HEK293 (cell line): ENCODE measurements at regions of chr14 and their contacts with region 1.

Region 1: GRCh38 chr14:76911473-76911872 is 85.3 kb downstream of the LRRC74A start:
- H3K4me3 ChIP-seq: no peak overlapping the region
- H3K27ac ChIP-seq: no peak overlapping the region
- H3K4me1 ChIP-seq: no peaks in the 10 kb centered on the region
- CTCF ChIP-seq: no peak

Region 2: DNA sequence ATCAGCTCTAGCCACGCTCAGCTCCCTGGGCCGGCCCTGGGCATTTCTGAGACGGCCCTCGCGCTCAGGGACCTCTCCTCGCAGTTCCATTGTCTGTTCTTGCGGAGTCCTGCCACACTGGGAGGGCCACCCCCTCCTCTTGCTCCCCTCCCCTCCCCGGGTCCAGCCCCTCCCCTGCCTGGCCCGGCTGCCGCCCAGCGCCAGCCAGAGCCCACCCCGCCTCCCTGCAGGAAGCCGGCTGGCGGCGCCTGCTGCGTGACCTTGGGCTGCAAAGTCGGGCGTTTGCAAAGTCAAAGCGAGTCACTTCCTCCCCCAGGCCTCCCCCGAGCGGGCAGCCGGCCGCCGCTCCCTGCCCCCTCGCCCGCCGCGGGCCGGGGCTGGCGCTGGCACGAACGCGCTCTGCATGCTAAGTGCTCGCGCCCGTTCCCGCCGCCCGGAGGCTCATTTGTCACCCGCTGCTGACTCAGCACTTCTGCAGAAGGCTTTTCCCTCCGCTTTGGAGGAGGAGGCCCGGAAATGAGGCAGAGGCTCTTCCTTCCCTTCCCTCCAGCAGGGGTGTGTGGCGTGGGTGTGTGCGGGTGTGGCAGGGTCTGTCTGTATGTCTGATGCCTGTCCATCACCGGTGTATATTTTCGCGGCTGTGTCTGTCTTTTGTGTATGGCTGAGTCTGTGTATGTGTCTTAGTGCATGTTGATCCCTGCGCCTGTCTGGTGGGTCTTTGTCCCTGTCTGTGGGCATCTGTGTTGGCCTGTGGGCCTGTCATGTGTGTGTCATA is 45.0 kb after region 1 on chr14:
- CTCF ChIA-PET with region 1: interaction called, 28 read pairs
- POLR2A ChIA-PET with region 1: interaction called, 4 read pairs
- H3K4me3 ChIP-seq: peak overlapping the region; percentile 30
- H3K27ac ChIP-seq: peak overlapping the region; percentile 95
- H3K4me1 ChIP-seq: peaks cover 24% of the 10 kb centered on the region
- CTCF ChIP-seq: peak; percentile 47; the same call in 1 of the 2 replicates

Region 3: DNA sequence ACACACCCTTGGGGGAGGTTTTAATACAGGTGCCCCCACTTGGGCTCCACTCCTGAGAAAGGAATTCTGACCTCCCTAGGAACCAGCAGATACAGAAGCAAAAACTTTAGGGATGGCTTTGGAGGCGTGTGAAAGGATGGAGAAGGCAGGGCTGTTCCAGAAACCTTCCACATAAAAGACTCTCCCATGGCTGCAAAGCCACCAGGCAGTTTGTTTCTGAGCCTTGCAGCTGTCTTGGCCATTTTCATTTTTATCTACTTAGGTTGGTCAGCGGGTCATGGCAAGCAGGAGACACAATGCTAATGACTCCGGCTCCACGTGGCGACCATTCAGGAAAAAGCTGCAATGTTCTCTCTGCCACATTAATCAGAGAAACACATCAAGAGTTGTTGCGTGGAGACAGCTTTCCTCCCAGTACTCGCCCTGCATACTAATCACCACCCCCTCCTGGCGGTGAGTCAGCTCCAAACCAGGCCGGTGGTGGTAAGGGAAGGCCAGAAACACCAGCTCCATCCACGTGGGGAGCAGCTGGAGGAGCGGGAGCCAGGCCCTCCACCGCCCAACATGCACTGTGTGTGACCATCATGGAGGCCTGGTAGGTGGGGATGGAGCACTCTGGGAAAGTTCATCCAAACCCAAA is 147.9 kb after region 1 on chr14:
- CTCF ChIA-PET with region 1: interaction called, 83 read pairs
- POLR2A ChIA-PET with region 1: no interaction called
- H3K4me3 ChIP-seq: no peak overlapping the region
- H3K27ac ChIP-seq: no peak overlapping the region
- H3K4me1 ChIP-seq: no peaks in the 10 kb centered on the region
- CTCF ChIP-seq: no peak

Region 4: DNA sequence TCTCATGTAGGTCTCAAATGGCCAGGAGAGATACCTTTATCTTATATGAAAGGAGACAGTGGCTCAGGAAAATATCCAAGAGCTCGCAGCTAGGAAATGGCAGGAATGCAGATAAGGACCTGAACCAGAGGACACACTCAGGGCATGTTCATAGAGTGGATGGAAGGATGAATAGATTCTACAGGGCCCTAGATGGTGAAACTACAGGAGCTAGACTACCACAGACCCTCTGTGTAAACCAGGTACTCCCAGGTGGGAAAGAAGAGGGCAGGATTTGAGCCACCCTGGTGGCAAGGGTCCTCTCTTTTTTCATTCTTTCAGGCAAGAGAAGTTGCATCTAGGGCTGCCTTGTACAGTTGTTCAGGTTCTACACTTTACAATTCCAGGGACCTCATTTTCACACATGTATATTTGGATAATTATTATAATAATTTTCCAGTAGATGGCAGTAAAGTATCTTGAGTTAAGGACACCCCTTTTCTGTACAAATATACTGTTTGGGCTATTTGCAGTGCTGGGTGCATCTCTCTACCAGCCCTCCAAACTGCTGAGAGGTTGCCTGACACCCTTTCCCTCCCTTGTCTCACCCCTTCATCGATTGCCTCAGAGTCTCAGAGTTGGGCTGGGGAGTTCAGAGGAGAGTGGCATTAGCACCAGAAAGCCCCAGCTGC is 240.6 kb after region 1 on chr14:
- CTCF ChIA-PET with region 1: no interaction called
- POLR2A ChIA-PET with region 1: no interaction called
- H3K4me3 ChIP-seq: no peak overlapping the region
- H3K27ac ChIP-seq: no peak overlapping the region
- H3K4me1 ChIP-seq: no peaks in the 10 kb centered on the region
- CTCF ChIP-seq: no peak